IMR-90 (cell line): ENCODE measurements at regions of chr15 and their contacts with region 1.

Region 1: GRCh38 chr15:81195339-81195864 is 1.3 kb upstream of the IL16 start:
- DNase-seq: no peak
- ATAC-seq: no peak; the same call in 1 of the 2 replicates
- H3K4me3 ChIP-seq: no peak overlapping the region
- H3K27ac ChIP-seq: no peak overlapping the region
- H3K4me1 ChIP-seq: peaks cover 17% of the 10 kb centered on the region
- H3K27me3 ChIP-seq: no peaks in the 10 kb centered on the region
- CTCF ChIP-seq: no peak
- POLR2A ChIP-seq: no peak
- RAD21 ChIP-seq: no peak

Region 2: DNA sequence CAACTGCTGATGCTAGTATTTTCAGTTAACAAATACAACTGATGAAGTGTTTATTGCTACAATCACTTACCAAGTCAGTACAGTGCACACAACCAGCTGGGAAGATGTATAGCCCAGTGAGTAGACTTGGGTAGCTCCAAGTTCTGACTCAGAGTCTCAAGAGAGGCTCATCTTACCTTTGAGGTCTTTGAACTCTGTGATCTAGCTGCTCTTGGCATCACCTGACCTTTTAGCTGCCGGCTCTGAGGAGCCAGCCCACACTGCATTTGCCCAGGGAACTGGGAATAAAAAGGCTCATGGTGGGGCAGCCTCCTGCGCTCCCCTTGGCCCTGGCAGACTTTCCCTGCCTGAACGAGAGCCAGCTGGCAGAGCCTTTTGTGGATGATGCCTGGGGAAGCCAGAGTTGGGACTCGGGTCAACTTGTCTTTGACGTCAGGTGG is 333.7 kb before region 1 on chr15:
- CTCF ChIA-PET with region 1: no interaction called
- POLR2A ChIA-PET with region 1: no interaction called
- dilution Hi-C with region 1: no loop called
- in situ Hi-C with region 1: no loop called
- intact Hi-C with region 1: no loop called
- DNase-seq: peak; percentile 74
- ATAC-seq: peak; percentile 32
- H3K4me3 ChIP-seq: no peak overlapping the region
- H3K27ac ChIP-seq: no peak overlapping the region
- H3K4me1 ChIP-seq: peaks cover 6% of the 10 kb centered on the region; the same call in 1 of the 2 replicates
- H3K27me3 ChIP-seq: no peaks in the 10 kb centered on the region
- CTCF ChIP-seq: no peak
- POLR2A ChIP-seq: no peak
- RAD21 ChIP-seq: no peak

Region 3: DNA sequence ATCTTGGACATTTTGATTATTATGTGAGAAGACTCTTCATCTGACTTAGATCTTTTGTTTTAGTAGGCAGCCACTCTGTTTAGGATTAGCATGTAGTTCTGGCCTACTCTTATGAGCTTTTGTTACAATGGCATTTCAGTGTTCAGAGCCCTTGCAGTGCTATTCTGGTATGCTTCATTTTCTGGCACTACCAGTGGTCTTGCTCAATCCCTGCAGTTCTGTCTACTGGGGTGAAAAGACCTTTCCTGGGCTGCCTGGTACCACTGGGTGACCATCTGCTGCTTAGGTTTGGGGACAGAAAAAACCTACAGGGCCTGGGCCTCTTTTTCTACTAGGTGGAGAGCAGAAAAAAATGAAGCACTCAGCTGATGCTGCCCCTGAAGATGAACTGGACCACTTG is 43.8 kb after region 1 on chr15:
- CTCF ChIA-PET with region 1: no interaction called
- POLR2A ChIA-PET with region 1: no interaction called
- dilution Hi-C with region 1: no loop called
- in situ Hi-C with region 1: no loop called
- intact Hi-C with region 1: loop called (anchors 5 kb)
- DNase-seq: peak; percentile 41
- ATAC-seq: peak; percentile 75
- H3K4me3 ChIP-seq: no peak overlapping the region
- H3K27ac ChIP-seq: no peak overlapping the region
- H3K4me1 ChIP-seq: peaks cover 6% of the 10 kb centered on the region
- H3K27me3 ChIP-seq: no peaks in the 10 kb centered on the region
- CTCF ChIP-seq: no peak
- POLR2A ChIP-seq: no peak
- RAD21 ChIP-seq: no peak

Region 4: DNA sequence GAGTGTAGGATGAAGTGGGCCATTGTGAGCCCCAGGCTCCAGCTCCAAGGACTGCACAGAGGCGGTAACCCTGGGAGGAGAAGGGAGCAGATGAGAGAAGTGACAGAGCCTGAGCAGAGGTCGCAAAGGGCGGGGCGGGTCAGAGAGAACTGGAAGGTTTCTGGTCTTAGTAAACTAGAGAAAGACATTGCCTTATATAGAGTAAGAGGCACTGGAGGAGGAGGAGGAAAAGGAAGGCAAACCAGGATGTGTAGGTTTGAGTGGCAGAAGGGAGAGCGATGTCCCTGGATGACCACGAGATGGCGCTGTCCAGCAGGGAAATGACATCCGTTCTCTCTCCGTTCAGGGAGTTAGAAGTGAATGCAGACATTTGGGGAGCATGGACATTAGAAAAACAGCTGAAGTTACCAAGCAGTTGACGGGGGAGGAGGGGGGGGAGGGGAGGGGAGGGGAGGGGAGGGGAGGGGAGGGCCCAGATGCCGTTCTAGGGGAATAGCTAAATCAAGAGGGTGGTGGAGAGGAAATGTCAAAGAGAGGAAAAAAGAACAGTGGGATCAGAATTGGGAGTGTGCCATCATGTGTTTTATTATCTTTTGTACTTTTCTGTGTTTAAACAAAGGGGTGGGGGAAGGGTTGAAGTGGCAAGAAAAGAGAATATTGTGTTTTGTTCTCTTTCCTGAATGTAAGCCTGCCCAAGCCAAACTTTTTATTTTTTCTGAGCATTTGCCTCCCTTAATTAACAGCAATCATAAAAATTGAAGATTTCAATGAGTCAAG is 79.7 kb after region 1 on chr15:
- CTCF ChIA-PET with region 1: no interaction called
- POLR2A ChIA-PET with region 1: no interaction called
- dilution Hi-C with region 1: no loop called
- in situ Hi-C with region 1: no loop called
- intact Hi-C with region 1: no loop called
- DNase-seq: peak; percentile 86
- ATAC-seq: peak; percentile 91
- H3K4me3 ChIP-seq: no peak overlapping the region
- H3K27ac ChIP-seq: no peak overlapping the region; the same call in 1 of the 2 replicates
- H3K4me1 ChIP-seq: peaks cover 9% of the 10 kb centered on the region
- H3K27me3 ChIP-seq: no peaks in the 10 kb centered on the region
- CTCF ChIP-seq: peak; percentile 92
- POLR2A ChIP-seq: no peak
- RAD21 ChIP-seq: peak; percentile 98